G401 (cell line): ENCODE measurements at regions of chr12 and their contacts with region 1.

Region 1: GRCh38 chr12:43766291-43766690 is 7.5 kb downstream of the IRAK4 start:
- DNase-seq: no peak

Region 2: GRCh38 chr12:43665091-43665490 is 101.2 kb before region 1 on chr12:
- in situ Hi-C with region 1: no loop called
- DNase-seq: no peak

Region 3: DNA sequence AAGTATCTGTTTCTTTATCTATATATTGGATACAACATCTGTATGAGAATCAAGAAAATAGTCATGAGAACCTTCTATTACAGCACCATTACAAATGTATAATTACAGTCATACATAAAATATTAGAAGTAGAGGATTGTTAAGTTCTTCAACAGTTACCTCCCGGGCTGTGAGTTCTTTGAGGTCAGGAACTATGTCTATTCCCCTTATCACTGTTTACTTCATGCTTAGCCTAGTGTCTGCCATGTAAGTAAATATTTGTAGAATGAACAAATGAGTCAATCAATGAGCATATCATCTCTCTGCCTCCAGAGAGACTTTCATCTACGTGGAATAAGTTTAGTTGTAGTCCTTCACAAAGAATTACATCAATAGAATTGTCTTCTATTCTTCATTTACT is 54.9 kb before region 1 on chr12:
- in situ Hi-C with region 1: no loop called
- DNase-seq: no peak

Region 4: GRCh38 chr12:43882578-43883178 is 116.4 kb after region 1 on chr12:
- in situ Hi-C with region 1: loop called (anchors 10 kb)
- DNase-seq: peak; percentile 56

Region 5: DNA sequence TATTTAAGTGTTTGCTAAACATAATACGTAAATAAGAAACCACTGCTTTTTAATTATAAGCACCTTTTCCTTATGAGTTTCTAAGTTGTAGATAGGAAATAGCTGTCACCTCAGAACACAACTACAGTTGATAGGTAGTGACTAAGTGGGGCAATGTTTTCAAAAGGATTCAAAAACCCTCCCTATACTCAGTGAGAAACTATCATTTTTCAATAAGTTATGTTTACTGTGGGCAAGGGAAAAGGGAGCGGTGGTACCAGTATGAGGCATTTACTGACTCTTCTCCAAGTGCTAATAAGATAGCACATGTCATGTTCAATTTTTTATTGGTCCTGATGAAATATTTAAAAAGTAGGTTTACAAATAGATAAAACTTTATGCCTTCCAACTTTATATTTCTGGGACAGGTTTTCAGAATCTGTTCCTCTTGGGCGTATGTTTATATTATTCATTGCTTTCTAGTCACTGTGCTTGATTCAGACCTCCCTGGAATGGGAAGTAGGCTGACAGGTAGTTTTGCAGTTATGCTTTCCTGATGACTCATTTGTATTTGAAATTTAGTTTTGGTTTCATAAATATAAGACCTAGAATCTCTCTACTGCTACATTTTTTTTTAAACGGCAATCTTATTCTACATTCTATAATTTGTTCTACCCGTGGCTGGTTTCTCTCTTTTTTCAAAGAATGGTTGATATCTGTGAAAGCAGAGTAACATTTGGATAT is 222.7 kb after region 1 on chr12:
- in situ Hi-C with region 1: no loop called
- DNase-seq: no peak